Activated T-helper 1 cell treated with anti-CD3 and anti-CD28 coated beads, Interleukin-12 subunit alpha, Interleukin-12 subunit beta, Interleukin-2, Interleukin-4 antibody, amounts not matched to agents 30 ng/mL and 10 ng/mL and 1 ng/mL, durations not matched to agents 14 hours and 24 hours and 36 hours (primary cell): ENCODE measurements at regions of chr10 and their contacts with region 1.

Region 1: GRCh38 chr10:127853868-127854768 is 38.6 kb downstream of the CLRN3 start:
- DNase-seq: peak; percentile 12
- H3K4me3 Mint-ChIP-seq: no peak overlapping the region
- H3K27ac Mint-ChIP-seq: no peak overlapping the region
- H3K4me1 Mint-ChIP-seq: no peaks in the 10 kb centered on the region
- H3K27me3 Mint-ChIP-seq: peaks cover 6% of the 10 kb centered on the region

Region 2: DNA sequence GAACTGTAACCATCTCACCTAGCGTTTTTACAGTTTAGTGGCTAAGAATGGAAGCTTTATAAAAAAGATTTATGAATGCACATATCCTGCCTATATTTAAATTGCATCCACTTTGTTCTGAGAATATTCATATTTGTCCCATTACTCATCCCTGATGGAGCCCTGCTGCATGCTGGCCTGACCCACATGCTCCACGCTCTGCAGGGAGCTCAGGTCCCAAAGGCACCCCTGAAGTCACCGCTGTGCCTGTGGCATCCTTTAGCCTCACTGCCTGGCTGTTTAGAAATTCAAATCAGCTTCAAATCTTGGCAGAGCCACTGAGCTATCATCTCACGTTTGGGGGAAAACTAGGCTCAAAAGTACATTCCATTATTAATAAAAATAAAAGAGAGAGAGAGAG is 1208.0 kb before region 1 on chr10:
- intact Hi-C with region 1: no loop called
- DNase-seq: no peak
- H3K4me3 Mint-ChIP-seq: no peak overlapping the region
- H3K27ac Mint-ChIP-seq: no peak overlapping the region
- H3K4me1 Mint-ChIP-seq: no peaks in the 10 kb centered on the region
- H3K27me3 Mint-ChIP-seq: no peaks in the 10 kb centered on the region

Region 3: GRCh38 chr10:127243490-127244272 is 610.4 kb before region 1 on chr10:
- intact Hi-C with region 1: loop called (anchors 5 kb)
- DNase-seq: peak; percentile 11
- H3K4me3 Mint-ChIP-seq: no peak overlapping the region
- H3K27ac Mint-ChIP-seq: no peak overlapping the region
- H3K4me1 Mint-ChIP-seq: no peaks in the 10 kb centered on the region
- H3K27me3 Mint-ChIP-seq: peaks cover 4% of the 10 kb centered on the region

Region 4: GRCh38 chr10:127368929-127369328 is 485.2 kb before region 1 on chr10:
- intact Hi-C with region 1: no loop called
- DNase-seq: no peak
- H3K4me3 Mint-ChIP-seq: no peak overlapping the region
- H3K27ac Mint-ChIP-seq: no peak overlapping the region
- H3K4me1 Mint-ChIP-seq: no peaks in the 10 kb centered on the region
- H3K27me3 Mint-ChIP-seq: no peaks in the 10 kb centered on the region

Region 5: GRCh38 chr10:127563718-127564553 is 290.2 kb before region 1 on chr10:
- intact Hi-C with region 1: loop called (anchors 2 kb)
- DNase-seq: no peak
- H3K4me3 Mint-ChIP-seq: no peak overlapping the region
- H3K27ac Mint-ChIP-seq: no peak overlapping the region
- H3K4me1 Mint-ChIP-seq: no peaks in the 10 kb centered on the region
- H3K27me3 Mint-ChIP-seq: no peaks in the 10 kb centered on the region

Region 6: GRCh38 chr10:127715782-127716378 is 138.2 kb before region 1 on chr10:
- intact Hi-C with region 1: loop called (anchors 1 kb)
- DNase-seq: no peak
- H3K4me3 Mint-ChIP-seq: no peak overlapping the region
- H3K27ac Mint-ChIP-seq: no peak overlapping the region
- H3K4me1 Mint-ChIP-seq: no peaks in the 10 kb centered on the region
- H3K27me3 Mint-ChIP-seq: no peaks in the 10 kb centered on the region

Region 7: GRCh38 chr10:127755753-127756152 is 98.4 kb before region 1 on chr10:
- intact Hi-C with region 1: no loop called
- DNase-seq: no peak
- H3K4me3 Mint-ChIP-seq: no peak overlapping the region
- H3K27ac Mint-ChIP-seq: no peak overlapping the region
- H3K4me1 Mint-ChIP-seq: no peaks in the 10 kb centered on the region
- H3K27me3 Mint-ChIP-seq: peaks cover 3% of the 10 kb centered on the region

Region 8: DNA sequence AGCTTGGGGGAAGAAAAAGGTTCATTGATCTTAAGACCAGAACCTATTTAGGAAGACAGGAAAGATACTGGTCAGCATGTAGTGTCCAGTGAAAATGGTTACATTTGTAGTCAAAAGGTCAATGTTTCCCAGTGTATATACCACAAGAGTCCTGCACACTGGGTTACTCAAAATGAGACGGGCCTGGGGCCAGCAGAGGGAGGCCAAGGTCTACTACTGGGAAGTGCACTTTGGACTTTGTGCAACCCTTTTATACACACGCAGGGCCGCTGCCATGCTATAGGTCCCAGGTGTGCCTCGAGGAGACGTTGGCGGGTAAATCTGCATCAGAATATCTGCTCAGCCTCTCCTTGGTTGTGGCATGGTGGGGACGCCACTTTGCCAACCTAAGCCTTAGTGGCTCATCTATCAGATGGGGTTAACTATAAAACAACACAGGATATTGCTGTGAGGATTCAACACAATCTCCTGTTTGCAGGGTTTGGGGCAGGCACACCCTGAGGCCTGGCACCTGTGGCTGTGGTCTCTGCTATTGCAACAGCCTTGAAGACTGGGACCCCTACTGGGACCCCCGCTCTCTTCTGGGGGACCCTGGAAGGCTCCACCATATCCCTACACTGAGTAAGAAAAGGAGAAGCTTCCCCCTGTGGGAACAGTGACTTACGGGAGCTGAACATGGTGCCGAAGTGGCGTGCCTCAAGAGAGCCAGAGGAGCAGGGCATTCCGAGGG is 18.9 kb after region 1 on chr10:
- intact Hi-C with region 1: no loop called
- DNase-seq: no peak
- H3K4me3 Mint-ChIP-seq: no peak overlapping the region
- H3K27ac Mint-ChIP-seq: no peak overlapping the region
- H3K4me1 Mint-ChIP-seq: peaks cover 14% of the 10 kb centered on the region
- H3K27me3 Mint-ChIP-seq: peaks cover 22% of the 10 kb centered on the region